CD4-positive, alpha-beta memory T cell (primary cell): ENCODE measurements at regions of chr11 and their contacts with region 1.

Region 1: GRCh38 chr11:121451986-121452608 is at the start of gene SORL1:
- DNase-seq: peak; percentile 70 to 81 (median 72)
- H3K4me3 ChIP-seq: peak within 1 kb of the TSS; percentile 82 to 90
- H3K4me3 Mint-ChIP-seq: peak within 1 kb of the TSS; percentile 93 to 100 (median 98)
- H3K27ac ChIP-seq: peak within 1 kb of the TSS; percentile 79
- H3K27ac Mint-ChIP-seq: peak within 1 kb of the TSS; percentile 91 to 98 (median 96)
- H3K4me1 ChIP-seq: peaks cover 82% of the 10 kb centered on the region
- H3K4me1 Mint-ChIP-seq: peaks cover 56 to 91% (median 69%) of the 10 kb centered on the region in 4 donors
- H3K27me3 ChIP-seq: no peaks in the 10 kb centered on the region
- H3K27me3 Mint-ChIP-seq: no peaks in the 10 kb centered on the region
- total RNA-seq, gene SORL1: 610 to 660 TPM

Region 2: DNA sequence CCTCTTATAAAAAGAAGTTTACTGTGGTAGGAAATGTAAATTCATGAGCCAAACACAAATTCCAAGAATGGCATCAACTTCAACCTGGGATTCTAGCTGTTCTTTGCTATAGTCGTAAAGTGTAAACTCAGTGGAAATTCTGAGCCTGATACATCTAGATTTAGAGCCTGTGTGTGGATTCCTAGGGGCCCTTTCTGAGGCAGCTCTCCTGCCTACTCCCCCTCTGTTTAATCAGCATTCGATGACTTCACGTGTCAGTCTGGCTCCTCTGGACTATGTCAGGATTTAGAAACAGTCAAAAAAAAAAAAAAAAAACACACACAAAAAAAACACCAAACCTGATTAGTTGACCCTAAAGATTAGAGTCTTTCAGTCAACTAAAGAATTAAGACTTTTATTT is 252.6 kb before region 1 on chr11:
- CTCF ChIA-PET with region 1: no interaction called
- POLR2A ChIA-PET with region 1: no interaction called
- intact Hi-C with region 1: no loop called
- DNase-seq: no peak
- H3K4me3 ChIP-seq: no peak overlapping the region
- H3K4me3 Mint-ChIP-seq: no peak overlapping the region
- H3K27ac ChIP-seq: no peak overlapping the region
- H3K27ac Mint-ChIP-seq: no peak overlapping the region
- H3K4me1 ChIP-seq: no peaks in the 10 kb centered on the region
- H3K4me1 Mint-ChIP-seq: peaks cover 0 to 3% (median 3%) of the 10 kb centered on the region in 4 donors
- H3K27me3 ChIP-seq: peaks cover 3% of the 10 kb centered on the region
- H3K27me3 Mint-ChIP-seq: peaks cover 17 to 19% of the 10 kb centered on the region in 2 donors

Region 3: GRCh38 chr11:121292495-121293287 is 159.4 kb before region 1 on chr11 and contains the start of gene SC5D:
- CTCF ChIA-PET with region 1: interaction called, 3 read pairs
- POLR2A ChIA-PET with region 1: interaction called, 34 read pairs
- intact Hi-C with region 1: no loop called
- DNase-seq: peak; percentile 94 to 96 (median 95)
- H3K4me3 ChIP-seq: peak within 1 kb of the TSS; percentile 70 to 86
- H3K4me3 Mint-ChIP-seq: peak within 1 kb of the TSS; percentile 90 to 98 (median 96)
- H3K27ac ChIP-seq: peak within 1 kb of the TSS; percentile 86
- H3K27ac Mint-ChIP-seq: peak within 1 kb of the TSS; percentile 98 to 100 (median 99)
- H3K4me1 ChIP-seq: peaks cover 20% of the 10 kb centered on the region
- H3K4me1 Mint-ChIP-seq: peaks cover 36 to 52% (median 43%) of the 10 kb centered on the region in 4 donors
- H3K27me3 ChIP-seq: no peaks in the 10 kb centered on the region
- H3K27me3 Mint-ChIP-seq: peaks cover 0 to 2% of the 10 kb centered on the region in 2 donors
- total RNA-seq, gene SC5D: 27.4 to 28.7 TPM

Region 4: DNA sequence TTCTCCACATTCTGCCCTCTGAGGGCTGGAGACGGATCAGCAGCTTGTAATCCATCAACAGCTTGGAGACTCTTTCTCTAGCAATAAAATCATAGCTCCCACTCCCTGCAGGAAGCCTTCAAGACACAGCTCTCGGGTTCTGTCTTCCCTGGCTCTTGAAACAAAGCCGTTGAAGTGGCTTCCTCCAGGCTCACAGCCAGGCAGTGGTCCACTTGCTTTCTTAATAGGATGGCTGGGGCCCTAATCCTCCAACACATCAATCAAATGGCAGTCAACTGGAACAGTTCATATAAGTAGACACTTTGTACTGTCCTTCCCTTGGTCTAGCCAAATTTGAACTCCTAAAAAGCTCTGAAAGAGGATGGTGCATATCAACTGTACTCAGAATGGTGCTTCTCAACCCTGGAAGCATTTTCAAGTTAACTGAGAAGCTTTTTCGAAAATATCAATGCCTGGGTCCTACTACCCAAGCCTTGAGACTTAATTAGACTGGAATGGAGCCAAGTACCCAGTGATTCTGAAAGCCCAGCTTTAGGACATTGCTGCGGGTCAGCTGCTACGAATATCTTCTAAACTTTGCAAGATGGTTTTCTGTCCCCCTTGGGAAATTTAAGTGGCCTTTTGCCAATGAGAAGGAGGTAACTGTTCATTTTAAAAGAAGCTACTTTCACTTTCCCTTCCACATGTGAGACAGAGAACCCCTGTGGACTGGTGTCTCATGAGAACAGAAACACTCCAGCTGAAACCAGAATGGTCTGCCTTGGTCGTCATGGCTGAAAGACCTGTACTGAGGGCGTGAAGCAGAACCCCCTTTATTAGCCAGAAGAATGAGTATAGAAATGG is 84.9 kb before region 1 on chr11:
- CTCF ChIA-PET with region 1: interaction called, 9 read pairs
- POLR2A ChIA-PET with region 1: interaction called, 53 read pairs
- intact Hi-C with region 1: no loop called
- DNase-seq: peak; percentile 50 to 64 (median 59)
- H3K4me3 ChIP-seq: peak overlapping the region in 1 of 2 donors; percentile 34
- H3K4me3 Mint-ChIP-seq: peak overlapping the region; percentile 76 to 93 (median 86)
- H3K27ac ChIP-seq: peak overlapping the region; percentile 22
- H3K27ac Mint-ChIP-seq: peak overlapping the region; percentile 75 to 97 (median 93)
- H3K4me1 ChIP-seq: peaks cover 24% of the 10 kb centered on the region
- H3K4me1 Mint-ChIP-seq: peaks cover 23 to 60% (median 36%) of the 10 kb centered on the region in 4 donors
- H3K27me3 ChIP-seq: no peaks in the 10 kb centered on the region
- H3K27me3 Mint-ChIP-seq: peaks cover 0 to 1% of the 10 kb centered on the region in 2 donors

Region 5: DNA sequence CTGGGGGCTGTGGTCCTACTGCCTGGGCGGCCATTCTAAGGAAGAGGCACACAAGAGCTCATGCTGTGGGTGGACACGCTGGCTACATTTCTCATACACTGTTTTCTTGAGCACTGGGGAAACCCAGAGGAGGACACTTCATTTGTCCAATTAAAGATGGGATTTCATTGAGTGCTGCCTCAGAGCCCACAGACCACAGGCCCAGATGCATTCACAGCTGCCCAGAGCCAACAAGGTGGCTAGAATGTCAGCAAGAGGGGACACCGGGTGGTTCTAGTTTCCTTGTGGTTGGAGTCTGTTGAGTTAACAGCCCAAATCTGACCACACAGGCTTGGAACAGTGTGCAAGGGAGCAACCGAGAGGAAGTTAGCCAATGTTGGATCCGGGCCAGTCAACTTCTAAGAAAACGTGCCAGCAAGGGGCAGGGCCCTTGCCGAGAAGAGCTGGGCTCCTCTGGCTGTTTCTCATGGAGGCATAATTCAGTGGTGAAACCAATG is 35.0 kb before region 1 on chr11:
- CTCF ChIA-PET with region 1: interaction called, 12 read pairs
- POLR2A ChIA-PET with region 1: interaction called, 150 read pairs
- intact Hi-C with region 1: loop called (anchors 2 kb)
- DNase-seq: peak; percentile 58 to 72 (median 63)
- H3K4me3 ChIP-seq: no peak overlapping the region
- H3K4me3 Mint-ChIP-seq: peak overlapping the region in 7 of 8 donors; percentile 49 to 81 (median 68)
- H3K27ac ChIP-seq: peak overlapping the region; percentile 36
- H3K27ac Mint-ChIP-seq: peak overlapping the region; percentile 91 to 96 (median 93)
- H3K4me1 ChIP-seq: peaks cover 72% of the 10 kb centered on the region
- H3K4me1 Mint-ChIP-seq: peaks cover 51 to 85% (median 71%) of the 10 kb centered on the region in 4 donors
- H3K27me3 ChIP-seq: no peaks in the 10 kb centered on the region
- H3K27me3 Mint-ChIP-seq: no peaks in the 10 kb centered on the region

Region 6: DNA sequence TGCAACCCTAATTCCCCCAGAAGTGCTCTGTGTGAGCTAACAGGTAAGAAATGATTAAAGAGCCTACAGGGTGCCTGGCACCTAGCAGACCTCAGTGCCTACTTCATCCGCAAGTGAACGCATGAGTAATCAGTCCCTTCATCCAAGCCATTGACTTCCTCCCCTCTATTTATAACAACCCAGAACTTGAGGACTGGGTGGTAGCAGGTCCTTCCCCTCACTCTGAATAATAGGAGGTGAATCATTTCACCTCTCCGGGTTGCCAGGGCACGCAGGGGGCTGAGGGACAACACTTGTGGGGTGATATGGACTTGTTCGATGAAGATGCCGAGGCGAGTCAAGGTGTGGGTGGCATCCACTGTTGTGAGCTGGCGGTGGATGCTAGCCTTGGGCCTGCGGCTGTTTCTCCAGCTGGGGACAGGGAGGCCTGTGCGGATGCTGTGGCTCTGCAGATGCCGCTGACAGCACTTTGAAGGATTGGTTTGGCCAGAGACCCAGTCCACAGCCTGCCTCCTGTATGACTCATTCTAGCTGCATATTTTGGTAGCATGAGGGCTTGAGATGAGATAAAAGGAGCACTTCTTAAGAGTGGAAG is 12.4 kb after region 1 on chr11:
- CTCF ChIA-PET with region 1: interaction called, 90 read pairs
- POLR2A ChIA-PET with region 1: interaction called, 462 read pairs
- intact Hi-C with region 1: loop called (anchors 1 kb)
- DNase-seq: peak; percentile 61 to 96 (median 68)
- H3K4me3 ChIP-seq: peak overlapping the region in 1 of 2 donors; percentile 25
- H3K4me3 Mint-ChIP-seq: peak overlapping the region; percentile 62 to 92 (median 84)
- H3K27ac ChIP-seq: peak overlapping the region; percentile 57
- H3K27ac Mint-ChIP-seq: peak overlapping the region; percentile 89 to 98 (median 93)
- H3K4me1 ChIP-seq: peaks cover 100% of the 10 kb centered on the region
- H3K4me1 Mint-ChIP-seq: peaks cover 84 to 99% (median 92%) of the 10 kb centered on the region in 4 donors
- H3K27me3 ChIP-seq: no peaks in the 10 kb centered on the region
- H3K27me3 Mint-ChIP-seq: no peaks in the 10 kb centered on the region

Region 7: GRCh38 chr11:121517996-121518395 is 65.9 kb after region 1 on chr11:
- CTCF ChIA-PET with region 1: no interaction called
- POLR2A ChIA-PET with region 1: no interaction called
- intact Hi-C with region 1: no loop called
- DNase-seq: no peak
- H3K4me3 ChIP-seq: no peak overlapping the region
- H3K4me3 Mint-ChIP-seq: no peak overlapping the region
- H3K27ac ChIP-seq: no peak overlapping the region
- H3K27ac Mint-ChIP-seq: peak overlapping the region; percentile 38 to 82 (median 66)
- H3K4me1 ChIP-seq: no peaks in the 10 kb centered on the region
- H3K4me1 Mint-ChIP-seq: peaks cover 23 to 78% (median 49%) of the 10 kb centered on the region in 4 donors
- H3K27me3 ChIP-seq: no peaks in the 10 kb centered on the region
- H3K27me3 Mint-ChIP-seq: no peaks in the 10 kb centered on the region

Region 8: GRCh38 chr11:121534131-121535093 is 82.3 kb after region 1 on chr11:
- CTCF ChIA-PET with region 1: no interaction called
- POLR2A ChIA-PET with region 1: interaction called, 4 read pairs
- intact Hi-C with region 1: loop called (anchors 5 kb)
- DNase-seq: no peak
- H3K4me3 ChIP-seq: no peak overlapping the region
- H3K4me3 Mint-ChIP-seq: no peak overlapping the region
- H3K27ac ChIP-seq: peak overlapping the region; percentile 7
- H3K27ac Mint-ChIP-seq: peak overlapping the region in 4 of 7 donors; percentile 2 to 80 (median 71)
- H3K4me1 ChIP-seq: peaks cover 16% of the 10 kb centered on the region
- H3K4me1 Mint-ChIP-seq: peaks cover 23 to 51% (median 40%) of the 10 kb centered on the region in 4 donors
- H3K27me3 ChIP-seq: no peaks in the 10 kb centered on the region
- H3K27me3 Mint-ChIP-seq: no peaks in the 10 kb centered on the region